Colonic mucosa (tissue), 4 donors: ENCODE measurements at regions of chr21 and their contacts with region 1.

Region 1: DNA sequence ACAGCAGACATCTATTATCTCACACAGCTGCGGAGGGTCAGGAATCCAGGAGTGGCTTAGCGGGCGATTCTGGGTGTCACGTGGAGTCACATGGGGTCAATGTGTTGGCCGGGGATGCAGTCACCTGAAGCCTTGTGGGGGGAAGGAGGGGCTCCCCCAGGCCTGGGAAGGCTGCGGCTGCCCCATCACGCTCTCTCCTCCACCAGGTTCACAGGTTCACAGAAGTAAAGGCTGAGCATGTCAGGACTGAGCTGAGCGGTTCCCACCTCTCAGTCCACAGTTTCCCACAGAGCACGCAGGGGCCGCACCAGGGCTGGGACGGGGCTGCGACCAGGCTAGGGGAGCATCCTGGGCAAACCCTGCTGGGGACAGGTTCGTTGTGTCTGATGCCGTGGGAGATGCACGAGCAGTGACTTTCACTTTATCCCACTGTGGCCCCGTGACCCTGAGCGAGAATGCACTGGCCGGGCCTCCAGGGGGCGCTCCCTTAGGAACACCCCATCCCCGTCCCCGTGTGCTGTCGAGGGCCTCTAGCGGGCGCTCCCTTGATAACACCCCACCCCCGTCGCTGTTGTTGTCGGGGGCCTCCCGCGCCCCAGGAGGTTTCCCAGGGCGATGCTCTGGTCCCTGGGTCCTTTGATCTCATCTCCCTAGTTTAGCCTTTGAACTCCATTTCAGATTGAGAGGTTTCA is 73.2 kb upstream of the TRAPPC10 start:
- DNase-seq: peak; percentile 86
- H3K4me3 ChIP-seq: peak overlapping the region; percentile 34
- H3K27ac ChIP-seq: no peak overlapping the region
- H3K4me1 ChIP-seq: no peaks in the 10 kb centered on the region
- H3K27me3 ChIP-seq: no peaks in the 10 kb centered on the region
- CTCF ChIP-seq: peak; percentile 98

Region 2: DNA sequence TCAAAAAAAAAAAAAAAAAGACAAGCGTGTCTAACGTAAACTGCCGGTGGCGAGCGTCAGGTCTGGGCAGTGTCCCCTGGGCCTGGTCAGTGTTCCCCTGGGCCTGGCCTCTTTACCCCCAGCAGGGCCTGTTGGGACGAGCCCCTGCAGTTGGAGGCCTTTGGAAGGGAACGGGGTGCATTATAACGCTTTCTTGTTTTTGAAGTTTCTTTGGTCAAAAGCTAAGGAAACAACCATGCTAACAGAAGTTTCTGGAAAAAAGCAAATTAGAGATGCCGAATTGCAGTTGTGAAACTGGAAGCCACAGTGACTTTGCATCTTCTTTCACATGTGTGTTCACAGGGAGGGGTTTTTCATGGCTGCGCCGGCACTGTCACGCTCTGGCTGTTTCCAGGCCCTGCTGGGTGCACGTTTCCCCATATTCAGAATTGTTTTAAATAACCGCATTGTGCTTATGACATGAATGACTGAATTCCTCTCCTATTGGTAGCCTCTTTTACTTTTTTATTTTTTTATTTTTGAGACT is 133.6 kb before region 1 on chr21:
- intact Hi-C with region 1: loop called (anchors 5 kb)
- DNase-seq: no peak
- H3K4me3 ChIP-seq: no peak overlapping the region
- H3K27ac ChIP-seq: no peak overlapping the region
- H3K4me1 ChIP-seq: no peaks in the 10 kb centered on the region
- H3K27me3 ChIP-seq: no peaks in the 10 kb centered on the region
- CTCF ChIP-seq: no peak